ENCODE measurements at regions of chr11 and their contacts with region 1.

Region 1: GRCh38 chr11:119474682-119475596 is 52.0 kb upstream of the THY1 start:
- DNase-seq: peak; percentile 87
- ATAC-seq: peak; percentile 86
- H3K4me3 Mint-ChIP-seq: no peak overlapping the region
- H3K27ac Mint-ChIP-seq: no peak overlapping the region
- H3K4me1 Mint-ChIP-seq: peaks cover 39% of the 10 kb centered on the region
- H3K27me3 Mint-ChIP-seq: peaks cover 5% of the 10 kb centered on the region; the same call in 1 of the 2 replicates
- CTCF ChIP-seq: peak; percentile 95

Region 2: GRCh38 chr11:119356349-119357031 is 118.4 kb before region 1 on chr11:
- CTCF ChIA-PET with region 1: interaction called, 84 read pairs
- POLR2A ChIA-PET with region 1: interaction called, 3 read pairs
- DNase-seq: peak; percentile 91
- ATAC-seq: peak; percentile 80
- H3K4me3 Mint-ChIP-seq: peak overlapping the region; percentile 76
- H3K27ac Mint-ChIP-seq: peak overlapping the region; percentile 36
- H3K4me1 Mint-ChIP-seq: peaks cover 39% of the 10 kb centered on the region
- H3K27me3 Mint-ChIP-seq: peaks cover 19% of the 10 kb centered on the region
- CTCF ChIP-seq: peak; percentile 93

Region 3: GRCh38 chr11:119373921-119374631 is 100.9 kb before region 1 on chr11:
- CTCF ChIA-PET with region 1: interaction called, 68 read pairs
- POLR2A ChIA-PET with region 1: no interaction called
- DNase-seq: peak; percentile 92
- ATAC-seq: peak; percentile 71
- H3K4me3 Mint-ChIP-seq: no peak overlapping the region
- H3K27ac Mint-ChIP-seq: no peak overlapping the region
- H3K4me1 Mint-ChIP-seq: peaks cover 74% of the 10 kb centered on the region
- H3K27me3 Mint-ChIP-seq: peaks cover 1% of the 10 kb centered on the region; the same call in 1 of the 2 replicates
- CTCF ChIP-seq: peak; percentile 79

Region 4: GRCh38 chr11:119389611-119390254 is 85.2 kb before region 1 on chr11:
- CTCF ChIA-PET with region 1: interaction called, 23 read pairs
- POLR2A ChIA-PET with region 1: no interaction called
- DNase-seq: peak; percentile 79
- ATAC-seq: peak; percentile 98
- H3K4me3 Mint-ChIP-seq: no peak overlapping the region
- H3K27ac Mint-ChIP-seq: no peak overlapping the region
- H3K4me1 Mint-ChIP-seq: peaks cover under 1% of the 10 kb centered on the region
- H3K27me3 Mint-ChIP-seq: no peaks in the 10 kb centered on the region
- CTCF ChIP-seq: peak; percentile 33; the same call in 1 of the 2 replicates

Region 5: DNA sequence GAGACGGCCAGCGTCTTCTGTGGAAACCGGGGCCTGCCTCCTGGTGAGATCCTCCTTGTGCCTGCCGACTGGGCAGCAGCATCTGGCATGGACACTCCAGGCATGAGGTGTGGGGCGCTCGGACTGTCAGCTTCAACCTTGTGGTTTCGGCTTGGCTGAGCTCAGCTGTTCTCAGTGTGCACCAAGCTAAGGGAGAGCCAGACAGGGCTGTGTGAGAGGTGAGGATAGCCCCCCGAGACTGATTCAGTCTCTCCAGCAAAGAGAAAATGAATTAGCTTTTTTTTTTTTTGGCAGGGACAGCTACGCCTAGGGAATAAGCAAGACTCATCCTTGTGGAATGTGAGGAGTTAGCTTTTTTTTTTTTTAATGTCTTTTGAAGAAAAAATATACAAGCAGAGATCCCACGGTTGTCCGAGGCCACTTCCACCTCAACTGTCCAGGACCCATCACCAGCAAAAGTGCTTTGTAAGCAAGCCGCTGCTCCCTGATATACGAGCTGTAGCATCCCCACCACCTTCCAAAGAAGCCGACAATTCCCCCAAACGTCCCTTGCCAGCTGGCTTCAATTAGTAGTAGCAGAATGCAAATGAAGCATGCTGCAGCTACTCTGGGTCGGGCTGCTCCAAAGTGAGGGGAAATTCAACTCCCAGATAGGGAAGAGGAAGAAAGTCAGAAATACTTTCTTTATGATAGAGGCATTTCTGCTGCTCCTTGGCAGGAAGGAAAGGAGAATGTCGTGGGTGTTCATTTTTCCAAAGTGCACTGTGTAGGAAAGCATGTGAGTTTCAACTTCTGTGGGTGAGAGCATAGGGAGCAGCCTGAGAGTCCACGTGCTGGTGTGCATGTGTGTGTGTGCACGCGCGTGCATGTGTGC is 42.2 kb before region 1 on chr11:
- CTCF ChIA-PET with region 1: interaction called, 18 read pairs
- POLR2A ChIA-PET with region 1: no interaction called
- DNase-seq: no peak
- ATAC-seq: peak; percentile 65
- H3K4me3 Mint-ChIP-seq: no peak overlapping the region
- H3K27ac Mint-ChIP-seq: no peak overlapping the region
- H3K4me1 Mint-ChIP-seq: peaks cover 42% of the 10 kb centered on the region
- H3K27me3 Mint-ChIP-seq: peaks cover 16% of the 10 kb centered on the region
- CTCF ChIP-seq: no peak

Measured in WTC11 (cell line).